Left cardiac atrium (tissue), 4 donors: ENCODE measurements at regions of chr2 and their contacts with region 1.

Region 1: GRCh38 chr2:20466417-20466911 is 19.6 kb downstream of the RHOB start:
- DNase-seq: no peak
- ATAC-seq: peak; percentile 47 to 61

Region 2: DNA sequence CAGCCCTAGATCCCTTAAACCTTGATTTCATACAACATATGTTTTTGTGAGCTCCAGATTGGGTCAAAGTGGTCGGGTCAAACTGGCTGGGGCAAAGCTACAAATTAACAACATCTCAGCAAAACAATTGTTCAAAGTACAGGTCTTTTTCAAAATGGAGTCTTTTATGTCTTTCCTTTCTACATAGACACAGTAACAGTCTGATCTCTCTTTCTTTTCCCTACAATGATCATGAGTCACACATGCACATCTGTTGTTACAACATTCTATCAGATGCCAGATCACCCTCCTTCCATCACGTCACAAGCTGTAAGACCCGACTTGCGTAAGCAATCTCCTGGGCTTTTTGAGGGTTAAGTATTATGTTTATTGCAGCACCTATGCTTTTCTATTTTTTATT is 35.5 kb after region 1 on chr2:
- intact Hi-C with region 1: loop called in 1 of 2 experiments (anchors 5 kb)
- DNase-seq: no peak
- ATAC-seq: peak; percentile 48 to 63